HEK293 (cell line): ENCODE measurements at regions of chr7 and their contacts with region 1.

Region 1: DNA sequence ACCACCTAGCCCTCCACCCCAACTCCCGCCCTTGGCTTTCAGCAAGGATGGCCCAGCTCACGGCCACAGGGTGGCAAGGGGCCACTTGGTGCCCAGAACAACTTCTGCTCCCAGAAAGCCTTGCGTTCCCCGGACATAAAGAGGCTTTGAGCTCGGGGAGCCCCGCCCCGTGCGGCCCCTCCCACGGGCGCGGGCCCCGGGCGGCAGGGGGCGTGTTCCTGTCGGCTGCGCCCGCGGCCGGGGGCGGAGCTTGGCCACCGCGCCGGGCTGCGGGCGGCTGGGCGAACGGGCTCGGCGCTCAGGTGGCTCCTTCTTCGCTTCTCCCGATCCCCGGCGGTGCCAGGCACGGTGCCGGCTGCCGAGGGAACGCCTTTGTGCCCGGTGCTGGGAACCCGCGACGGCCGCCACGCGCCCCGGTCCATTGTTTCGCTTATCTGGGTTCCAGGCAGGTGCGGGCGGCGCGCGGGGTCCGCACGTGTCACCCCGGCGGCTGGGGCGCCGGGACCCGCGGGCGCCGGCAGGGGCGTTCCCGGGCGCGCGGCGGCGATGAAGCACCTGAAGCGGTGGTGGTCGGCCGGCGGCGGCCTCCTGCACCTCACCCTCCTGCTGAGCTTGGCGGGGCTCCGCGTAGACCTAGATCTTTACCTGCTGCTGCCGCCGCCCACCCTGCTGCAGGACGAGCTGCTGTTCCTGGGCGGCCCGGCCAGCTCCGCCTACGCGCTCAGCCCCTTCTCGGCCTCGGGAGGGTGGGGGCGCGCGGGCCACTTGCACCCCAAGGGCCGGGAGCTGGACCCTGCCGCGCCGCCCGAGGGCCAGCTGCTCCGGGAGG is at the start of gene NFE2L3:
- H3K4me3 ChIP-seq: peak within 1 kb of the TSS; percentile 71
- H3K27ac ChIP-seq: peak within 1 kb of the TSS; percentile 71; the same call in 1 of the 2 replicates
- H3K4me1 ChIP-seq: peaks cover 4% of the 10 kb centered on the region; the same call in 1 of the 2 replicates
- CTCF ChIP-seq: peak; percentile 46; the same call in 1 of the 2 replicates

Region 2: DNA sequence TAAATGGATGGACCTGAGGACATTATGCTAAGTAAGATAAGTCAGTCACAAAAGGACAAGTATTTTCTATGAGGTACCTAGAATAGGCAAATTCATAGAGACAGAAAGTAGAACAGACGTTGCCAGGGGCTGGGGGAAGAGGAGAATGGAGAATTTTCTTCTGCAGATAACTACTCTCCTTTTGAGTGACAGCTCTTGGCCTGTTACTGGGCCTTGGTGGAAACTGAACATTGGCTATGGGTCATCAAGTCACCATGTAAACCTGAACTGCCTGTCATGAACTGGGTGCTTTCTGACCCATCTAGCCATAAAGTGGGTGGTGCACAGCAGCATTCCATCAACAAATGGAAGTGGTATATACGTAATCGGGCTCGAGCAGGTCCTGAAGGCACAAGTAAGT is 29.4 kb before region 1 on chr7:
- CTCF ChIA-PET with region 1: no interaction called
- POLR2A ChIA-PET with region 1: no interaction called
- H3K4me3 ChIP-seq: no peak overlapping the region
- H3K27ac ChIP-seq: no peak overlapping the region
- H3K4me1 ChIP-seq: no peaks in the 10 kb centered on the region
- CTCF ChIP-seq: no peak

Region 3: GRCh38 chr7:26187380-26188205 is 35.4 kb after region 1 on chr7:
- CTCF ChIA-PET with region 1: no interaction called
- POLR2A ChIA-PET with region 1: interaction called, 10 read pairs
- H3K4me3 ChIP-seq: no peak overlapping the region
- H3K27ac ChIP-seq: no peak overlapping the region
- H3K4me1 ChIP-seq: no peaks in the 10 kb centered on the region; the same call in 1 of the 2 replicates
- CTCF ChIP-seq: no peak